PC-3 (cell line): ENCODE measurements at regions of chr3 and their contacts with region 1.

Region 1: GRCh38 chr3:106578911-106579310 is 710.1 kb upstream of the CBLB start:
- DNase-seq: peak; percentile 80
- ATAC-seq: peak; percentile 99
- H3K4me3 ChIP-seq: no peak overlapping the region
- H3K27ac ChIP-seq: peak overlapping the region; percentile 14; the same call in 1 of the 2 replicates
- H3K4me1 ChIP-seq: peaks cover 15% of the 10 kb centered on the region
- H3K27me3 ChIP-seq: no peaks in the 10 kb centered on the region
- CTCF ChIP-seq: no peak

Region 2: GRCh38 chr3:106452096-106452495 is 126.8 kb before region 1 on chr3:
- CTCF ChIA-PET with region 1: no interaction called
- POLR2A ChIA-PET with region 1: interaction called, 11 read pairs
- intact Hi-C with region 1: no loop called
- DNase-seq: no peak
- ATAC-seq: no peak
- H3K4me3 ChIP-seq: no peak overlapping the region
- H3K27ac ChIP-seq: no peak overlapping the region
- H3K4me1 ChIP-seq: peaks cover 11% of the 10 kb centered on the region
- H3K27me3 ChIP-seq: no peaks in the 10 kb centered on the region
- CTCF ChIP-seq: no peak